Pancreas (tissue), 10 donors: ENCODE measurements at regions of chr4 and their contacts with region 1.

Region 1: DNA sequence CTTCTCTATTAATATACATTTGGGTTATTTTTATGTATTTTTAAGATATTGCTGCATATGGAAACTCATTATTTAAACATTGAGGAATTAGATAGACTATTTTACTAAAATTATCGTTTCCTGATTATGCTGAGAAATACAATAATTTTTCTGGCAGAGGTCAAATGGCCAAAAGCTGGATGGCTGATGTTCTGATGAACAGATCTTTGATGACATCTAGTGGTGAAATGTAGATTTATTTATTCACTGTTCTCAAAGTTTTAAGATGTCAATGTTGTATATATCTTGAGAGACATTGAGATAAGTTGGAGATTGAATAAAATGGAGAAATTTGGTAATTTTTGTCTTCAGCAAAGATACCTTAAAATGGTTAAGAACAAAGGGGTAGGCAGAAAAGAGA is 96.2 kb downstream of the UGT8 start:
- DNase-seq: no peak
- ATAC-seq: peak in 2 of 4 donors; percentile 48 to 58
- H3K4me3 ChIP-seq: no peak overlapping the region
- H3K27ac ChIP-seq: no peak overlapping the region
- H3K4me1 ChIP-seq: no peaks in the 10 kb centered on the region
- H3K27me3 ChIP-seq: no peaks in the 10 kb centered on the region
- CTCF ChIP-seq: peak; percentile 7 to 53 (median 30)

Region 2: GRCh38 chr4:114386637-114387233 is 308.0 kb before region 1 on chr4:
- intact Hi-C with region 1: loop called in 2 of 3 experiments (anchors 5 to 10 kb)
- DNase-seq: peak in 1 of 6 donors; percentile 15
- ATAC-seq: peak; percentile 46 to 73 (median 66)
- H3K4me3 ChIP-seq: no peak overlapping the region
- H3K27ac ChIP-seq: no peak overlapping the region
- H3K4me1 ChIP-seq: no peaks in the 10 kb centered on the region
- H3K27me3 ChIP-seq: no peaks in the 10 kb centered on the region
- CTCF ChIP-seq: peak in 3 of 4 donors; percentile 50 to 55 (median 53)

Region 3: DNA sequence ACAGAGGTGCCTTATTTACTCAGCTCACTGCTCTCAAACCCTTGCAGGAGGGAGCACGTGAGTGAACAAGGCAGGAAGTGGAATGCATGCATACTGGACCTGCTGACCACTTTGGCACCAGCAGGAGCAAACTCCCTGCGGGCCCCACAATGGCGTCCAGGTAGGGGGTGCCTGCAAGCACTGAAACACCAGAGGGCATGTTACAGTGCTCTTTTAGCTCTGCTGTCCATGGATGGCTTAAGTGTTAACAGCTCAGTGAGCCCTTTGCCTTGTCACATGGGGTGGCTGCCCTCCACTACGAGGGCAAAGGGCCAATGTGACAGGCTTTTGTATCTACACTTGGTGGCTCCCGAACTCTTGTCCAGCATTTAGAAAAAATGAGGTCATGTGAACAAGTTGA is 295.7 kb before region 1 on chr4:
- intact Hi-C with region 1: loop called in 1 of 3 experiments (anchors 10 kb)
- DNase-seq: no peak
- ATAC-seq: no peak
- H3K4me3 ChIP-seq: no peak overlapping the region
- H3K27ac ChIP-seq: no peak overlapping the region
- H3K4me1 ChIP-seq: no peaks in the 10 kb centered on the region
- H3K27me3 ChIP-seq: no peaks in the 10 kb centered on the region
- CTCF ChIP-seq: no peak